GM10248 (cell line): ENCODE measurements at regions of chr14 and their contacts with region 1.

Region 1: DNA sequence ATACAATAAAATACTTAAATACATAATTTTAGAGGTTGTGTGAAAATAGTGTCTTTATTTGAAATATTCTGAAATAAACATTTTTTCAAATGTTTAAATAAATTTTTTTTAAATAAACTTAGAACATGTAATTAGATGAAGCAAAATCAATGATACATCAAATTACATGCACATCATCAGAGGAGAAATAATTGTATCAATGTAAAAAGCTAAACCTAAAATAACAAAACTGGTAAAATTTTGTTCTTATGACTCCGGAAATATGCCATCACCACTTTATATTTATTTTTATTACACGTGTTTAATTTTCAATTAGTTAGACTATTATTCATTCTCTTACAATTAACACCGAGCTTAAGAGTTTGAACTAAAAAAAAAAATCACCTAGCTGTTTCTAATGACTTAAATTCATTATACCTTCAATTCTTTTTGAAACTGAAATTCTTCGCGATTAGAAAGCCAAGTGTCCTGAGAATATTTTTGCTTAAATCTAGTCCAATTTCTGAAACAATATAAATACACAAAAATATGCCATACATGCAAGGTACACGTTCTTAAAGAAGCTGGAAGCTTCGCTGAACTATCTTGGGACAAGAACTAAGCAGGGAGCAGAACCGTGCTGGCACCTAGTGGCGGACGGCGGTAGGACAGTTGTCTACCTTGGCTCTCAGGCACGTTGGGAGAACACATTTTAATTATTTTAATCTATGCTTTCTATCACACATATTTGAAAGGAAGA is 230.5 kb downstream of the SLC25A21 start:
- DNase-seq: peak; percentile 35
- CTCF ChIP-seq: peak; percentile 98

Region 2: DNA sequence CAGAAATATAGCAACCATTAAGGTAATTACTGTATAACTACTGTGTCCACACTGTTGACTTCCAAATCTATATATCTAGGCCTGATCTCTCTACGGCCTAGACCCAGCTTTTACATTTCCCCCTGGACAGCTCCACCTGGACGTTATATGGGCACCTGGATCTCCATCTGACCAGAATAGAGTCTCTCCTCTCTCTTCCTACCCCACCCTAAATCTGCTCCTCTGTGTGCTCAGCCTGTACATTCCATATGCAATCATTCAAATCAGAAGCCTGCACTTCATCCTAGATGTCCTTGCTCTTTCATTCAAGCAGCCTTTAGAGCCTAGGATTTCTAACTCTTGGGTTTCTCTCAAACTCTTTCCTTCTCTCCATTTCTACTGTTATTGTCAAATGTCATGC is 25.3 kb before region 1 on chr14:
- CTCF ChIA-PET with region 1: interaction called, 13 read pairs
- POLR2A ChIA-PET with region 1: no interaction called
- DNase-seq: no peak
- CTCF ChIP-seq: no peak

Region 3: DNA sequence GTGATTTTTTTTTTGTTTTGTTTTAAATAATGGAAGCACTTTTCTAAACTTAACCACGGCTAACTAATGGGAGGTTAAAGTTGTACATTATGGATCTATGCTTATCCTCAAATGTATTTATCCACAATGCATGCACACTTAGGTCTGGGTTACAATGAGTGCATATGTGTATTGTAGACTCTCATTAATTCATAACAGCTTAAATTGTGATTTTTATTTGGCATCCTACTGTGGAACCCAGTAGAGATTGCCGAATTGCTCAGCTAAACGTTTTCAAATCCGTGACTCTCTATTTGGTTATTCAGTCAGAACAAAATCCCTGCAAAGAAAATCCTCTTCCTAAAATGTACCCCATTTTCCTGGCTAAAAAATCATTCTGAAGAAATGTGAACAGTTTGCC is 13.5 kb before region 1 on chr14:
- CTCF ChIA-PET with region 1: interaction called, 15 read pairs
- POLR2A ChIA-PET with region 1: no interaction called
- DNase-seq: no peak
- CTCF ChIP-seq: no peak

Region 4: DNA sequence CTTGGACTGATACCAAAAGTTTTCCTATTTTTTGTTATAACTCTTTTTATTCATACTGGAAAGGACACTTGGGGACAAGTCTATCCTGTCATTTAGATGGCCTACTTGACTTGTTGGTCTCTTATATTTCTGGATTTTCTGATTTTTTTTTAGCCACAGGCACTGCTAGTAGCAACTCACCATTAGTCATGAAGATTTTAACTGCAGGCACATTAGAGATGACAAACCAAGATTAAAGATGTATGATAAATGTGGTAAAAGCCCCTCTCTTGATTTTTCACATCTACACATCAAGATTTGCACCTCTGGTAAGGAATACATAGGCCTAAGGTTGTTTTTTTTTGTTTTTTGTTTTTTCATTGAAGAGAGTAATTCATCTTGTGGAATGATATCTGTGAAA is 13.4 kb after region 1 on chr14:
- CTCF ChIA-PET with region 1: interaction called, 13 read pairs
- POLR2A ChIA-PET with region 1: no interaction called
- DNase-seq: no peak
- CTCF ChIP-seq: no peak